ENCODE measurements at regions of chr4 and their contacts with region 1.

Region 1: DNA sequence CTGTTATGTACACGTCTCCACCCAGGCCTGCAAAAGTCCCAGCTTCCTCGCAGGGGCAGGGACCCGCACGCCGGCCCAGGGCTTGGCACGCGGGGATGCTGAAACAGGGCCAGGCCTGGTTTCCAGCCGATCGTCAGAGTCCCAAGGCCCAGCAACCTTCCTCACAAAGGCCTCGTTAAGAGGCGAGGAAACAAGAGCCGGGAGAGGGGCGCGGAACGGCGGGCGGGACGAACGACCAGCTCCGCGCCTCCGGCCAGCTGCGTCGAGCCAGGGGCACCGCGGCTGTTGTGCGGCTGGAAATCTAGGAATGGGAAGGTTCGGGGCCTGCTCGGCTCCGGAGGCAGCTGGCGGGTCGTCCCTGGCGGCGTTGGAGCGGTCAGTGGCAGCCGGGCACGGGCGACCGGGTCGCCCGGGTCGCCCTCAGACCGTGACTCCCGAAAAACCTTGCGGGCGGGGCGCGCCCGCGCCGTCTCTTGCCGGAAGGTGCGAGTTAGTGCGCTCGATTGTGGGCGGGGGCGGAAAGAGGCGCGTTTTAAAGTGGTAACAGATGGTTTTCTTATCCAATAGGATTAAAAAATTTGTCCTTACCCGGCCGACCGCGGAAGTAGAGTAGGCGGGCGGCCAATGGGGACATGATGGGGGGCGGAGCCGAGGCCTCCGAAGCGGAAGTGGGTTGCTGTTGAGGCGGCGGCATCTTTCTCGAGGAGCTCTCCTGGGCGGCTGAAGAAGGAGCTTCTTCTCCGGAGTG is at the start of gene RNF4:
- DNase-seq: peak; percentile 97
- H3K4me3 Mint-ChIP-seq: peak within 1 kb of the TSS; percentile 97
- H3K27ac Mint-ChIP-seq: peak within 1 kb of the TSS; percentile 98
- H3K4me1 Mint-ChIP-seq: peaks cover 52% of the 10 kb centered on the region
- H3K27me3 Mint-ChIP-seq: peaks cover 2% of the 10 kb centered on the region
- total RNA-seq, gene RNF4: 106 to 113 TPM

Region 2: DNA sequence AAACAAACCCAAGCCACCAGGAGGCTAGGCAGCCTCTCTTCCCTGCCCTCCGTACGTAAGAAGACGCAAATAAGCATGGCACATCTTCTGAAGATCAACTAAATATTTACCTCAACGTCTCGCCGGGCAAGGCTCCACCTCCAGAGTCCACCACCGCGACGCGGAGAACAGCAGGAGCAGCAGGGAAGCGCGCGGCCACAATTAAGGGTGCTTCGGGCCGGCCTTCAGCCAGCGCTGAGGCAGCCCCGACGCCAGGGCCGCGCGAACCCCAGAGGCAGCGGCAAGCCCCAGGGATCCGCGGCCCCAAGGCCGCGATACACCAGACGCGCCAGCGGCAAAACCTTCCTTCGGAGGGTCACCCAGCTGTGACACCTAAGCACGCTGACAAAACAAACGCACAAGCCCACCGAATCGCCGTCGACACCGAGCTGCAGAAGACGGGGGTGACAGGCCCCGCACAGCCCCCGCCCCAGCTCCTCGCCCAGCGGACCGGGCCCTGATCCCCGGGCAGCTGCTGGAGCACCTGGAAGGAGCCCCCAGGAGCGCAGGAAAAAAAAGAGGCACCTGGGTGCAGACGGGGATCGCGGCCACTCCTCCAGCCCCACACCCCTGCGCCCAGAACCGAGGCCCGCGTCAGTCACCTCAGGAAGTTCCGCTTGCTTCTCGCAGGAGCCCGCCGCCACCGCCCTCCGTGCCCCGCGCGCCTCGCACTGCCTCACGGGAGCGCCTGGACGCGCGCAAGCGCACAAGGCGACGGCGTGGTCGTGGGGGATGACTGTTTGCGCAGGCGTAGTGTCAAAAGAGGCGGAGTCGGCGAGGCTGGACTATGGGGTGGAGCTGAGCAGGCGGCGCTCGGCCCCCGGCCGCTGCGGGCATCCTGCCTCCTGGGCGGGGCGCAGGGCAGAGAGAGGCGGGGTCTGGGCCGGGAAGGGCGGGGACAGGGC is 226.9 kb before region 1 on chr4 and contains the starts of genes HAUS3 and POLN:
- CTCF ChIA-PET with region 1: interaction called, 6 read pairs
- POLR2A ChIA-PET with region 1: interaction called, 43 read pairs
- DNase-seq: peak; percentile 100
- H3K4me3 Mint-ChIP-seq: peak within 1 kb of the TSS; percentile 95
- H3K27ac Mint-ChIP-seq: peak within 1 kb of the TSS; percentile 92
- H3K4me1 Mint-ChIP-seq: peaks cover 59% of the 10 kb centered on the region
- H3K27me3 Mint-ChIP-seq: no peaks in the 10 kb centered on the region
- total RNA-seq, gene HAUS3: 27.1 to 27.4 TPM
- total RNA-seq, gene POLN: 3.3 to 4.0 TPM

Region 3: GRCh38 chr4:2262143-2262943 is 206.3 kb before region 1 on chr4:
- CTCF ChIA-PET with region 1: interaction called, 5 read pairs
- POLR2A ChIA-PET with region 1: interaction called, 24 read pairs
- DNase-seq: peak; percentile 99
- H3K4me3 Mint-ChIP-seq: peak overlapping the region; percentile 73
- H3K27ac Mint-ChIP-seq: peak overlapping the region; percentile 68
- H3K4me1 Mint-ChIP-seq: peaks cover 4% of the 10 kb centered on the region
- H3K27me3 Mint-ChIP-seq: no peaks in the 10 kb centered on the region

Region 4: DNA sequence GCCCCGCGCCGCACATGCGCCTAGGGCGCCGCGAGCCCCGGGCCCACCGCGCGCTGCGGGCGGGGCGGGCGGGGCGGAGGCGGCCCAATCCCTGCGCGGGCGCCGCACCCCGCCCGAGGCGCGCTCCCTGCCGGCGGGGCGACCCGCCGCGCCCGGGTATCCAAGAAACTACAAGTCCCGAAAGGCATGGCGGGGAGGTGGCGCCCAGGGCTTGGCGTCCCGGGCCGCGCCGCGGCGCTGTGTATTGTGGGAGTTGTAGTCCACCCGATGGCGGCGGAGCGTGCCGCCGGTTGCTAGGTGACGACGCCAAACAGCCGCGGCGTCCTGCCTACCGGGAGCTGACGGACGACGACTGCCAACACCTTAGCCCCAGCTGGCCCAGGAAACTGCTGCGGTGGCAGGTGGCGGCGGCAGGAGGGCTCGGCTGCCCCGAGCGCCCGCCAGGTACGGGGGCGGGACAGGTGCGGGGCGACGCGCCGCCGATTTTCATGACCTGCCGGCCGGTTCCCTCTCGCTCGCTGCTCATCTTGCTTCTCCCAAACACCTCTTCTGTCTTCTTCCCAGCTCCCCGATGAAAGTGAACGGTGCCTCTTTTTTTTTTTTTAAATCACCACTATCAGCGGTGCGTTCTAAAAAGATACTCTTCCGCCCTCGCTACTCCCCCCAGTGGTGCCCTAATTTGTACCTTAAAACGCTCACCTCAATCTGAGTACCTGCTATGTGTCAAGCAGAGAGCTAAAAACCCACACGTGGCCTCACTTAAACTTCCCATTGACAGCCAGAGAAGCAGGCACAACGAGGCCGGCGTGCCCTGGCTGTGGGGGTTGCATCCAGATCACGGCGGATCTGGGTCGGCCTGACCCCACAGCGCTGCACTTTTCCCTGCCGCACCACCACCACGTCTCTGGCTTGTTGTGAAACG is 49.7 kb before region 1 on chr4 and contains the start of gene CFAP99:
- CTCF ChIA-PET with region 1: interaction called, 9 read pairs
- POLR2A ChIA-PET with region 1: interaction called, 105 read pairs
- DNase-seq: peak; percentile 99
- H3K4me3 Mint-ChIP-seq: peak within 1 kb of the TSS; percentile 92
- H3K27ac Mint-ChIP-seq: peak within 1 kb of the TSS; percentile 75
- H3K4me1 Mint-ChIP-seq: peaks cover 40% of the 10 kb centered on the region
- H3K27me3 Mint-ChIP-seq: peaks cover 32% of the 10 kb centered on the region
- total RNA-seq, gene CFAP99: 0.08 TPM

Region 5: DNA sequence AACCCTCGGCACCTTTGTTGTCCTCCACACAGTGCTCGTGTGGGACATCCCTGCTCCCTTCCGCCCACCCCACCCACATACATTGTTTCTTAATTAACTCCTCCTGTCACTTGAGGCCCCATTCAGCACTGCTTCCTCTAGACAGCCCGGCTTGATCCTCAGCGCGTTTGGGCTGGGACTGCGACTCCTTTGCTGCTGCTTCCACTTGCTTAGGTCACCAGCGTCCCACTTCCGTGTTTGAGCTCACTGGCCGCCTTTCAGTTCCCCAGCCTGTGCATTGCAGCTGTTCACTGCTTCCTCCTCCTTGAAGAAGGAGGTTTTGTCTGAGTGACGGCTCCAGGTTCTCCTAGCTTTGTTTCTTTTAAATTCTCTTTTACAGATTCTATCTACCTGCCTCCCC is 16.4 kb after region 1 on chr4:
- CTCF ChIA-PET with region 1: interaction called, 36 read pairs
- POLR2A ChIA-PET with region 1: interaction called, 155 read pairs
- DNase-seq: peak; percentile 81
- H3K4me3 Mint-ChIP-seq: peak overlapping the region; percentile 44
- H3K27ac Mint-ChIP-seq: peak overlapping the region; percentile 79
- H3K4me1 Mint-ChIP-seq: peaks cover 90% of the 10 kb centered on the region
- H3K27me3 Mint-ChIP-seq: no peaks in the 10 kb centered on the region

Region 6: GRCh38 chr4:2489841-2490552 is 21.4 kb after region 1 on chr4:
- CTCF ChIA-PET with region 1: interaction called, 36 read pairs
- POLR2A ChIA-PET with region 1: interaction called, 155 read pairs
- DNase-seq: no peak
- H3K4me3 Mint-ChIP-seq: no peak overlapping the region
- H3K27ac Mint-ChIP-seq: no peak overlapping the region
- H3K4me1 Mint-ChIP-seq: peaks cover 53% of the 10 kb centered on the region
- H3K27me3 Mint-ChIP-seq: no peaks in the 10 kb centered on the region

Region 7: GRCh38 chr4:2536193-2537010 is 67.8 kb after region 1 on chr4 and contains the start of gene FAM193A:
- CTCF ChIA-PET with region 1: no interaction called
- POLR2A ChIA-PET with region 1: interaction called, 55 read pairs
- DNase-seq: peak; percentile 99
- H3K4me3 Mint-ChIP-seq: peak within 1 kb of the TSS; percentile 91
- H3K27ac Mint-ChIP-seq: peak within 1 kb of the TSS; percentile 88
- H3K4me1 Mint-ChIP-seq: peaks cover 19% of the 10 kb centered on the region
- H3K27me3 Mint-ChIP-seq: no peaks in the 10 kb centered on the region
- total RNA-seq, gene FAM193A: 27.4 to 27.9 TPM

Region 8: GRCh38 chr4:2647403-2648158 is 179.0 kb after region 1 on chr4:
- CTCF ChIA-PET with region 1: no interaction called
- POLR2A ChIA-PET with region 1: no interaction called
- DNase-seq: peak; percentile 7
- H3K4me3 Mint-ChIP-seq: no peak overlapping the region
- H3K27ac Mint-ChIP-seq: no peak overlapping the region
- H3K4me1 Mint-ChIP-seq: peaks cover 14% of the 10 kb centered on the region
- H3K27me3 Mint-ChIP-seq: no peaks in the 10 kb centered on the region

Measured in activated CD4-positive, alpha-beta memory T cell treated with anti-CD3 and anti-CD28 coated beads, Interleukin-2, amount 10 ng/mL, durations not matched to agents 7 days and 5 days (primary cell).